Right lobe of liver (tissue), 6 donors: ENCODE measurements at regions of chr20 and their contacts with region 1.

Region 1: DNA sequence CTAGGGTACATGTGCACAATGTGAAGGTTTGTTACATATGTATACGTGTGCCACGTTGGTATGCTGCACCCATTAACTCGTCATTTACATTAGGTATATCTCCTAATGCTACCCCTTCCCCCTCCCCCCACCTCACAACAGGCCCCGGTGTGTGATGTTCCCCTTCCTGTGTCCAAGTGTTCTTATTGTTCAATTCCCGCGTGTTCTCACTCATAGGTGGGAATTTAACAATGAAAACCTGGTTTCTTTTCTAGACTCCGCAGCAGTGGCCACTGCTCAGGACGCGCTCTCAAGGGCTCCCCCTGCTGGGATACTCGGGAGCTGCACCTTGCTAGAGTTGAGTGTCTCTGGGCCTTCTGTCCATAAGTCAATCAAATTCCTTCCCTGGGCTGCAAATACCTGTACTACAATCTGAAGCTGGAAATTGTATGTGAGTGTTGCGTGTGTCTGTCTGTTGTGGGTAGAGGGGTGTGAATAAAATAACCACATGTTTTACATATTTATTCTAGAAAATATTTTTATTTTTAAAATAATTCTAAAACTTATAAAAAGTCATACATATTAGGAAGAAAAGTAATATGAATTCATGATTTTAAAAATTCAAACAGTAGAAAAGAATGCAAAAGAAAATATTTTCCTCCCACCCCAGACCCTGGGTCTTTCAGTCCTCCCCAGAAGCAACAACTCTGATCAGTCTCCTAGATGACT is 8.2 kb upstream of the CEP250 start:
- DNase-seq: peak; percentile 81 to 85 (median 85)
- ATAC-seq: peak; percentile 95 to 99 (median 98)
- H3K4me3 ChIP-seq: peak overlapping the region; percentile 27 to 38 (median 36)
- H3K27ac ChIP-seq: no peak overlapping the region
- H3K4me1 ChIP-seq: no peaks in the 10 kb centered on the region
- H3K27me3 ChIP-seq: no peaks in the 10 kb centered on the region
- CTCF ChIP-seq: peak; percentile 87 to 97 (median 94)
- POLR2A ChIP-seq: no peak

Region 2: GRCh38 chr20:35297155-35297554 is 150.1 kb before region 1 on chr20:
- intact Hi-C with region 1: loop called (anchors 5 kb)
- DNase-seq: no peak
- ATAC-seq: peak in 1 of 4 donors; percentile 15
- H3K4me3 ChIP-seq: no peak overlapping the region
- H3K27ac ChIP-seq: no peak overlapping the region
- H3K4me1 ChIP-seq: peaks cover 0 to 6% (median 0%) of the 10 kb centered on the region in 4 donors
- H3K27me3 ChIP-seq: no peaks in the 10 kb centered on the region
- CTCF ChIP-seq: no peak
- POLR2A ChIP-seq: no peak

Region 3: GRCh38 chr20:35329435-35330139 is 117.6 kb before region 1 on chr20:
- intact Hi-C with region 1: no loop called
- DNase-seq: peak in 1 of 3 donors; percentile 39
- ATAC-seq: peak; percentile 31 to 47 (median 41)
- H3K4me3 ChIP-seq: no peak overlapping the region
- H3K27ac ChIP-seq: no peak overlapping the region
- H3K4me1 ChIP-seq: peaks cover 0 to 37% (median 23%) of the 10 kb centered on the region in 4 donors
- H3K27me3 ChIP-seq: no peaks in the 10 kb centered on the region
- CTCF ChIP-seq: peak; percentile 28 to 56 (median 52)
- POLR2A ChIP-seq: no peak